MCF 10A (cell line): ENCODE measurements at regions of chr12 and their contacts with region 1.

Region 1: DNA sequence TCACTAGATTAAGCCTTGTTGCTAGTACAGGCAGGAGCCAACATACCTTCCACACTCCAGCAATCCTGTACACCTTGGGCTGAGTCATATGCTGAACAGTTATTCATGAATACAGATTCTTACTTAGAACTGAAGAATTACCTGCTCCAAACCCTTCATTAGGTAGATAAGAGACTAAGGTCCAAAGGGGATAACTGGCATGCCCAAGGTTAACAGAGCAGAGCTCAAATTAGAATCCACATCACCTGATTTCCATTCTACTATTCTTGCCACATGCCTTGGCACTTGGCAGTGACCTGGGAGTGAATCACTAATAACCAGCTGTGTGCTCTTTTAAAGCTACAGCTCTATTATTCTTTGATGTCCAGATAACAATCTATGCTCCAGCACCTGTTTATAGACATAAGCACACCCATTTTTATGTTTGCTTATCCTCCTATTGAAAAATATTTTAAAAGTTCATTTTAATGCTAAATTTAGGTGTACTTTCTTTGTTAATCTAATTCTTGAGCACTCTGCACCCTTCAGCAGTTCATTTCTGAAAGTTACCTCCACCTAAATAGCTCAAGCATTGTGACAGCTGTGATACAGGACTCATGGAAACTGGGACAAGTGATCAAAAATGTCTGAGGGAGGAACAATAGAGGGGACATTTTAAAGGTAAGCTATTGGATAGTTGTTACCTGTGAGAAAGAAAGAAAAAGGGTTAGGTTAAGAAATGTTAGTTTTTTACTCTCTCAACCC is 19.4 kb downstream of the LPCAT3 start:
- DNase-seq: peak; percentile 71
- H3K4me3 Mint-ChIP-seq: no peak overlapping the region
- H3K27ac Mint-ChIP-seq: no peak overlapping the region
- H3K4me1 Mint-ChIP-seq: peaks cover 31% of the 10 kb centered on the region
- H3K27me3 Mint-ChIP-seq: no peaks in the 10 kb centered on the region
- CTCF ChIP-seq: no peak

Region 2: GRCh38 chr12:6278439-6279255 is 720.2 kb before region 1 on chr12:
- CTCF ChIA-PET with region 1: no interaction called
- POLR2A ChIA-PET with region 1: no interaction called
- intact Hi-C with region 1: no loop called
- DNase-seq: peak; percentile 89
- H3K4me3 Mint-ChIP-seq: peak overlapping the region; percentile 66
- H3K27ac Mint-ChIP-seq: peak overlapping the region; percentile 92
- H3K4me1 Mint-ChIP-seq: peaks cover 44% of the 10 kb centered on the region
- H3K27me3 Mint-ChIP-seq: no peaks in the 10 kb centered on the region
- CTCF ChIP-seq: peak; percentile 94

Region 3: GRCh38 chr12:7012024-7012607 is 13.2 kb after region 1 on chr12:
- CTCF ChIA-PET with region 1: interaction called, 4 read pairs
- POLR2A ChIA-PET with region 1: interaction called, 44 read pairs
- intact Hi-C with region 1: no loop called
- DNase-seq: no peak
- H3K4me3 Mint-ChIP-seq: no peak overlapping the region
- H3K27ac Mint-ChIP-seq: no peak overlapping the region
- H3K4me1 Mint-ChIP-seq: peaks cover 22% of the 10 kb centered on the region
- H3K27me3 Mint-ChIP-seq: no peaks in the 10 kb centered on the region
- CTCF ChIP-seq: no peak